ENCODE measurements at regions of chr7 and their contacts with region 1.

Region 1: DNA sequence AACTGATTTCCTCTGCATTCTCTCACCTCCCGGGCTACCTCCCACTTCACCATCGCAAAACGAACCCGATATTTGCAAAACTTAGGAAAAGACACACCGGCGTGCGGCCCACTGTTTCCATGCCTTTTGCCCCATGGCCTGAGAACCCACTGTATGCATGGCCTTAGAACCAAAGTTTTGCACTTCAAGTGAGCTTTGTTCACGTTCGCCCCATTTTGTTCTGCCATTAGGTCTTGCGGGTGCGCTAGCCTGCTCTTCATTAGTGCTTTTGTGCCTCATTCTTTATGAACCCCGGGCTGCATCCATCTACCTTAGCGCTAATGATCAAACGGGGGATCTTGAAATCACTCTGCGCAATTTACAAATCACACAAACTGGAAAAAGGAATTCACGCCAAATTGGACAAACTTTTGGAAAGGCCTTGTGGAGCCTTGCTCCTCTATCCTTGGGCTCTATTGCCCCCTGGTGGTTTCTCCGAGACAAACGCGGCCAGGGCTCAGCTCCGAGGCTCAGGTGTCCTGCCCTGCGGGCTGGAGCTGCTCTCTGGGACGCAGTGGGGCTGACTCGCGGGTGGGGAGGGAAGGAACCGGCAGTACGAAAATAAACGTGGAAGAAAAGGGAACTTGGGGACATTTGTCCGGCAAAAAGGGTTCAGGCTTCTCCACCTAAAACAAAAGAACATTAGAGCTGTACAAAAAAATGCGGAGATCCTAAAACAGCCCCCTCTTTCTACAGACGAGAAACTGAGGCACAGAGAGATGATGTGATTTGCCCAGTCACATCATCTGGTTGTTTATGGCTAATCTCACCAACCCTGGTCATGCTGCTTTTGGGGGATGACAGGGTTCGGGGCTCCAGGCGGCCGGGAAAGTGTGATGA is 300.4 kb upstream of the NFE2L3 start:
- DNase-seq: peak; percentile 85
- H3K4me3 Mint-ChIP-seq: peak overlapping the region; percentile 51
- H3K27ac Mint-ChIP-seq: no peak overlapping the region
- H3K4me1 Mint-ChIP-seq: peaks cover 19% of the 10 kb centered on the region
- H3K27me3 Mint-ChIP-seq: peaks cover 37% of the 10 kb centered on the region

Region 2: DNA sequence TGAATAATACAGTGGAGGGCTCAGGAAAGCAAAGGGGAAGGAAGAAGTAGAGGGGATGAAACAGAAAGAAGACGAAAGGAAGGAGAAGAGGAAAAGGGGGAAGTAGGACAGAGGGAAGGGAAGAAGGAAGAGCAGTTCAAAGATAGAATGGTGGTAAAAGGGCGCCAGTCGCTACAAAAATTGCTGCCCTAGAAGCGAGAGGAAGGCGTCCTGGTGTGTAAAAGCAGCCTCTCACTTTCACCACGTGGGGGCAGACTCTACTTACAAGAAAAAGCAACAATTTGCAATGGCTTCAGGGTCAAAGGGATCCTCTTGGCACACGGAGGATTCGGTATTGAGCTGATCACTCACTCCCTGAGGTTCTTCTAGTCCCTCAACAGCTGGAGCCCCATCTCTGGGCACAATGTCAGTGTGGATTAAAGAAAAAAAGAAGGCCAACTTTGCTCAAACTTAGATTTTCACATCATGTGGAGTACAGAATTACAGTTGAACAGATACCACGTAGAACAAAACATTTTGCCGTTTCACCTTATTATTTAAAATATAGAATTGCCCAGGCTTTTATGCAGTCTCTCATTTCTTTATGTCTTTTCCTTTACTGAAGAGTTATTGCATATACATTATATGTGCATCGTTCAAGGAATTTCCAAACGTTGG is 591.9 kb before region 1 on chr7:
- CTCF ChIA-PET with region 1: interaction called, 5 read pairs
- intact Hi-C with region 1: loop called (anchors 1 kb)
- DNase-seq: peak; percentile 84
- H3K4me3 Mint-ChIP-seq: peak overlapping the region; percentile 20
- H3K27ac Mint-ChIP-seq: no peak overlapping the region
- H3K4me1 Mint-ChIP-seq: peaks cover 24% of the 10 kb centered on the region
- H3K27me3 Mint-ChIP-seq: no peaks in the 10 kb centered on the region

Region 3: GRCh38 chr7:25565949-25566348 is 285.6 kb before region 1 on chr7:
- CTCF ChIA-PET with region 1: interaction called, 23 read pairs
- intact Hi-C with region 1: loop called (anchors 1 kb)
- DNase-seq: peak; percentile 77
- H3K4me3 Mint-ChIP-seq: no peak overlapping the region
- H3K27ac Mint-ChIP-seq: no peak overlapping the region
- H3K4me1 Mint-ChIP-seq: peaks cover 2% of the 10 kb centered on the region
- H3K27me3 Mint-ChIP-seq: no peaks in the 10 kb centered on the region

Region 4: DNA sequence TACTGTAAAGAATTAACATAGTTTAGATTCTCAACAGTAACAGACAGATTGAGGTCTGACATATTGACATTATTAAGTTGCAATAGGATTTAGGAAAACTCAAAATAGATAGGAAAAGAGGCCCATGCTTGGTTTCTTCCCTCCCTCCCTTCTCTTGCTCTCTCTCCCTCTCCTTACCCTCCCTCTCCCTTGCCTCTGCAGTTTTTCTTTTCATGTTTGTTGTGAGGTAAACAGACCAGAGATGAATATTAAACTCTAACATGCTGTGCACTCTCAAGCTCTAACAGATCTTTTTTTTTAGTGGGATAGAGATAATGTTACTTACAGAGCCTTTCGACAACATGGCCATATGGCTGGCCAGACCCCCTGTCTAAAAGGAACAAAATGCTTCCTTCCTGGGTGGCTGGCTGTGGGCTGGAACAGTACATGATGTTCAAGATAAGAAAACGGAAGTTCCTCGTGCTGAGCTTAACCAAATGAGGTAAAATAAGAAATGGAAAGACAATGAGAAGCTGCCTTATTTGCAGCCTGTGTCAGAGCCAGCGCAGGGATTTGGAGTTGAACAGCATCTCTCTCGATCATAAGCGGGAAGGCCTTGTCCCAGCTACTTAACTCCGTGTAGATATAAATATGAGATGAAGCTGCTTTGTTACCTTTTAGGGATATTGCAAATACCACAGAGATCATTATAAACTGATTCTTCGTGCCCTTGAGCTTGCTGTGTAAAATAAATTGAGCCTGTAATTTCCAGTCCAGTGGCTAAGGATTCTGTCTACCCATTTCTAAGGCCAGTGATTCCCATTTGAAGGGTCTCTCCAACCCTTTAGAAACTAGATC is 231.4 kb before region 1 on chr7:
- CTCF ChIA-PET with region 1: interaction called, 3 read pairs
- intact Hi-C with region 1: loop called (anchors 5 kb)
- DNase-seq: peak; percentile 31
- H3K4me3 Mint-ChIP-seq: peak overlapping the region; percentile 56
- H3K27ac Mint-ChIP-seq: peak overlapping the region; percentile 71
- H3K4me1 Mint-ChIP-seq: peaks cover 43% of the 10 kb centered on the region
- H3K27me3 Mint-ChIP-seq: no peaks in the 10 kb centered on the region

Region 5: DNA sequence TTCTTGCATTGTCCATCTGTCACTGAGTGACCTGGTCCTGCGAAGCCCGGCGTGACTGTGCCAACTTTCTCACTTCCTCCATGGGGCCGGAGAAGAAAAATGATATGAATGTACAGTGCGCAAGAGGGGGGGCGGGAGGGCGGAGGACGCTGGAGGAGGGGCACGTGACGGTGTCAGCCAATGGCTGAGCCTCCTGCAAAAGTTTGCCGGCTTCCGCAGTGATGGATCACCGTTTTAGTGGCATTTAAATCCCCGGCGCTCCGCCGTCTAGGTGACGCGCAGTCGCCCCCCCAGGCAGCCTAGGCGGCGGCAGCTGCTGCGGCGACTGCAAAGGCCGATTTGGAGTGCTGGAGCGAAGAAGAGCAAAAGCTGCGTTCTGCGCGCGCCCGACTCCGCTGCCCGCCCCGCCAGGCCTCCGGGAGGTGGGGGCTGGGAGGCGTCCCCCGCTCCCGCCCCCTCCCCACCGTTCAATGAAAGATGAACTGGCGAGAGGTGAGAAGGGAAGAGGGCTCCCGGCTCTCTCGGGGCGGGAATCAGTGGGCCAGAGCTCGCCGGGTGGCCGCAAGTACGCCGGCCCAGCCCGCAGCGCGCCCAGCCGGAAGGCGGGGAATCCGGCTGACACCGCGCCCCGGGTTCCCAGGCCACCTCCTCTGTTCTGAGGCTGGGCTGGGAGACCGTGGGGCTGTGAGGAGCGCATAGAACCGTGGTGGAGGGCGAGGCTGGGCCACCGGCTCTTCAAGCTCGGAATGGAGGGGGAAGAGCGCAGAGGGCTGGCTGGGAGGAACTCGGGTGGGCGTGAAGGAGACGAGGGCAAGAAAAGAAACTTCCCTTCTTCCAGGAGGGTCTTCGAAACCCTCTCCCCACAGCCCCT is 1244.6 kb after region 1 on chr7 and contains the start of gene HOXA1:
- CTCF ChIA-PET with region 1: no interaction called
- intact Hi-C with region 1: loop called (anchors 5 kb)
- DNase-seq: peak; percentile 82
- H3K4me3 Mint-ChIP-seq: peak within 1 kb of the TSS; percentile 80
- H3K27ac Mint-ChIP-seq: peak within 1 kb of the TSS; percentile 47
- H3K4me1 Mint-ChIP-seq: peaks cover 21% of the 10 kb centered on the region
- H3K27me3 Mint-ChIP-seq: peaks cover 82% of the 10 kb centered on the region
- total RNA-seq, gene HOXA1: 0.24 to 0.30 TPM